Activated CD8-positive, alpha-beta memory T cell treated with anti-CD3 and anti-CD28 coated beads, Interleukin-2, amount 10 ng/mL, durations not matched to agents 7 days and 5 days (primary cell): ENCODE measurements at regions of chr7 and their contacts with region 1.

Region 1: GRCh38 chr7:35624299-35625186 is 70.4 kb downstream of the HERPUD2 start:
- DNase-seq: peak; percentile 48
- ATAC-seq: peak; percentile 85
- H3K4me3 Mint-ChIP-seq: no peak overlapping the region
- H3K27ac Mint-ChIP-seq: no peak overlapping the region
- H3K4me1 Mint-ChIP-seq: peaks cover 2% of the 10 kb centered on the region
- H3K27me3 Mint-ChIP-seq: no peaks in the 10 kb centered on the region

Region 2: GRCh38 chr7:35424869-35425495 is 199.6 kb before region 1 on chr7:
- CTCF ChIA-PET with region 1: interaction called, 17 read pairs
- DNase-seq: peak; percentile 65
- ATAC-seq: peak; percentile 71
- H3K4me3 Mint-ChIP-seq: no peak overlapping the region
- H3K27ac Mint-ChIP-seq: no peak overlapping the region
- H3K4me1 Mint-ChIP-seq: peaks cover 2% of the 10 kb centered on the region
- H3K27me3 Mint-ChIP-seq: peaks cover 10% of the 10 kb centered on the region

Region 3: DNA sequence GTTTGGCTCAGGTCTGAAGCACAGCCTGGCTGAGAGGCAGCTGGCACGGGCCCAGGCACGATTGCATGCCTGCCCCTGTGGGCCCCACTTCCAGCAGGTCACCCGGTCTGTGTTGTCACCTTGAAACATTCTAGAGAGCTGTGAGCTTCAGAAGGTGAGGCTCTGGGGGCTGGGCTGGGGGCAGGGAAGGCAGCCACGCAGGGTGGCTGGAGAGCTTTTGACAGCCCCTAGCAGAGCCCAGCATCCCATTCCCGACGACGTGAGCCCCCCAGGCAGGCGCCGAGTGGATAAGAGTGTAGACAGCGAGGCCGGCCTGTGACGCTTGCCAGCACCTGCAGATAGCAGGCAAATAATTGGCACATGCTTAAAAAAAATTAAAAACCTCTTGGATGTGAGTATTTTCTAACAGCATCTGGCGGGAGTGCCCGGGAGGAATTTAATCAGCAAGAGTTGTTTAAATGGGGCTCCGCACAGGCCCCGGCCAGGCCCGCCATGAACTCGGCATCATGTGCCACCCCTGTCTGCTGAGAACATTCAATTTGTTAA is 158.7 kb before region 1 on chr7:
- CTCF ChIA-PET with region 1: no interaction called
- DNase-seq: no peak
- ATAC-seq: no peak
- H3K4me3 Mint-ChIP-seq: no peak overlapping the region
- H3K27ac Mint-ChIP-seq: no peak overlapping the region
- H3K4me1 Mint-ChIP-seq: no peaks in the 10 kb centered on the region
- H3K27me3 Mint-ChIP-seq: peaks cover 18% of the 10 kb centered on the region

Region 4: GRCh38 chr7:35613096-35613495 is 11.4 kb before region 1 on chr7:
- CTCF ChIA-PET with region 1: interaction called, 10 read pairs
- DNase-seq: no peak
- ATAC-seq: no peak
- H3K4me3 Mint-ChIP-seq: no peak overlapping the region
- H3K27ac Mint-ChIP-seq: no peak overlapping the region
- H3K4me1 Mint-ChIP-seq: no peaks in the 10 kb centered on the region
- H3K27me3 Mint-ChIP-seq: no peaks in the 10 kb centered on the region

Region 5: GRCh38 chr7:35645691-35646090 is 21.1 kb after region 1 on chr7:
- CTCF ChIA-PET with region 1: interaction called, 29 read pairs
- DNase-seq: no peak
- ATAC-seq: peak; percentile 73
- H3K4me3 Mint-ChIP-seq: peak overlapping the region; percentile 43
- H3K27ac Mint-ChIP-seq: no peak overlapping the region
- H3K4me1 Mint-ChIP-seq: peaks cover 45% of the 10 kb centered on the region
- H3K27me3 Mint-ChIP-seq: no peaks in the 10 kb centered on the region

Region 6: GRCh38 chr7:35658602-35659201 is 34.2 kb after region 1 on chr7:
- CTCF ChIA-PET with region 1: no interaction called
- DNase-seq: no peak
- ATAC-seq: no peak
- H3K4me3 Mint-ChIP-seq: no peak overlapping the region
- H3K27ac Mint-ChIP-seq: peak overlapping the region; percentile 57
- H3K4me1 Mint-ChIP-seq: peaks cover 42% of the 10 kb centered on the region
- H3K27me3 Mint-ChIP-seq: no peaks in the 10 kb centered on the region

Region 7: DNA sequence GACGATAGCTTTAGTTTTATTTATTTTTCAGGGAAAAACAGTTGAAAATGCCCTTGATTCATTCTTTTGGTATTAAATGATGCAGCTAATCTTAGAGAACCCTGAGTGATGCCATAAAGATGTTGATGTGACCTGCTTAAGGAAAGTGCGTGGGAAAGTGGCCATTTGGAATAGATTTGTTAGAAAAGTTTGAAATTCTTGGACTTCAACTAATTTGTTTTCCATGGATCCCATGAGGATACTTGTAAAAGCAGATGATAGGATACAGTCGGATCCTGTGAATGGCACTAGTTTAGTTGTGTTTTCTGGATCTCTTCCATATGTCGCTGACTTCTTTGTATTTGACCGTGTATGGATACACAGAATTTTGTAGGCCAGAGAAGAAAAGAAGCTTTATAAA is 245.3 kb after region 1 on chr7:
- CTCF ChIA-PET with region 1: no interaction called
- DNase-seq: no peak
- ATAC-seq: no peak
- H3K4me3 Mint-ChIP-seq: no peak overlapping the region
- H3K27ac Mint-ChIP-seq: no peak overlapping the region
- H3K4me1 Mint-ChIP-seq: peaks cover 16% of the 10 kb centered on the region
- H3K27me3 Mint-ChIP-seq: no peaks in the 10 kb centered on the region